ENCODE measurements at regions of chr11 and their contacts with region 1.

Region 1: DNA sequence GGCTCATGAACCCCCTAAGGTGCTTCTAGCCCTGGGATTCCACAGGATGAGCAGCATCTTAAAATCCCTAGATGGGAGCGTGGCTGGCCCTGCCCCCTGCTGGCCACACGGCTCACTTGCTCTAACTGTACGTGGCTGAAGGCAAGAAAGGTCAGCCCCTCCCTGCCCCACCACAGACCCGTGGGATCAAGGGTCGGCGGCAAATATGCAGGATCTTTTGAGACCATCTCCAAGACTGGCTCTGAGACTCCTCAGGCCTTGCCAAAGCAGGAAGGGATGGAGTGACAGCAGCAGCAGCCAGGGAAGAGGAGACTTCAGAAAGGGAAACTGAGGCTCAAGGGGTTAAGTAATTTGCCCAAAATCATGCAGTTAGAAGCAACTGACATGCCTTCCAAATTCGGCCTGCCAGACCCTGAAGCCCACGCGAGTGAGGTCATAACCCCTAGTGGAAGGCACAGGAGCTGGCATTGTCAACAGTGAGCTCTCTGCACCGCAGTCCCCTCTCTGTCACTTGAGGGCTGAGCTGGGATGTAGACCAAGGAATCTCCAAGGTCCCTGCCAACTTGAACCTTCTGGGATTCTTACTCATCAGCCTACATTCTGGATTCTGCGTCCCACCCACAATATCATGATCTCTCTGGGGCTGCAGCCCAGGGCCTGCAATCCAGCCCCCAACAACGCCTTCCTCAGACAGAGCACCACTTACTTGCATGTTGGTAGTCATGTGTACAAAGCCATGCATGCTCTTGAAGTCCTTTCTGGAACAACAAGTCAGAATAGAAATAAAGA is 31.4 kb downstream of the CREB3L1 start:
- DNase-seq: peak; percentile 88
- ATAC-seq: peak; percentile 88
- H3K4me3 Mint-ChIP-seq: no peak overlapping the region
- H3K27ac Mint-ChIP-seq: no peak overlapping the region
- H3K4me1 Mint-ChIP-seq: peaks cover 5% of the 10 kb centered on the region
- H3K27me3 Mint-ChIP-seq: no peaks in the 10 kb centered on the region
- CTCF ChIP-seq: peak; percentile 92

Region 2: GRCh38 chr11:45676522-45677095 is 632.2 kb before region 1 on chr11:
- CTCF ChIA-PET with region 1: no interaction called
- POLR2A ChIA-PET with region 1: no interaction called
- intact Hi-C with region 1: no loop called
- DNase-seq: no peak
- ATAC-seq: no peak
- H3K4me3 Mint-ChIP-seq: no peak overlapping the region
- H3K27ac Mint-ChIP-seq: no peak overlapping the region
- H3K4me1 Mint-ChIP-seq: no peaks in the 10 kb centered on the region
- H3K27me3 Mint-ChIP-seq: no peaks in the 10 kb centered on the region
- CTCF ChIP-seq: no peak

Region 3: GRCh38 chr11:46247664-46248063 is 61.2 kb before region 1 on chr11:
- CTCF ChIA-PET with region 1: interaction called, 382 read pairs
- POLR2A ChIA-PET with region 1: interaction called, 5 read pairs
- intact Hi-C with region 1: no loop called
- DNase-seq: peak; percentile 63
- ATAC-seq: no peak
- H3K4me3 Mint-ChIP-seq: no peak overlapping the region
- H3K27ac Mint-ChIP-seq: no peak overlapping the region
- H3K4me1 Mint-ChIP-seq: peaks cover 13% of the 10 kb centered on the region
- H3K27me3 Mint-ChIP-seq: peaks cover 2% of the 10 kb centered on the region
- CTCF ChIP-seq: peak; percentile 54

Region 4: GRCh38 chr11:46295312-46296058 is 13.3 kb before region 1 on chr11:
- CTCF ChIA-PET with region 1: interaction called, 42 read pairs
- POLR2A ChIA-PET with region 1: no interaction called
- intact Hi-C with region 1: no loop called
- DNase-seq: peak; percentile 73
- ATAC-seq: peak; percentile 98
- H3K4me3 Mint-ChIP-seq: peak overlapping the region; percentile 72
- H3K27ac Mint-ChIP-seq: no peak overlapping the region
- H3K4me1 Mint-ChIP-seq: peaks cover 12% of the 10 kb centered on the region
- H3K27me3 Mint-ChIP-seq: peaks cover 8% of the 10 kb centered on the region
- CTCF ChIP-seq: peak; percentile 19

Region 5: DNA sequence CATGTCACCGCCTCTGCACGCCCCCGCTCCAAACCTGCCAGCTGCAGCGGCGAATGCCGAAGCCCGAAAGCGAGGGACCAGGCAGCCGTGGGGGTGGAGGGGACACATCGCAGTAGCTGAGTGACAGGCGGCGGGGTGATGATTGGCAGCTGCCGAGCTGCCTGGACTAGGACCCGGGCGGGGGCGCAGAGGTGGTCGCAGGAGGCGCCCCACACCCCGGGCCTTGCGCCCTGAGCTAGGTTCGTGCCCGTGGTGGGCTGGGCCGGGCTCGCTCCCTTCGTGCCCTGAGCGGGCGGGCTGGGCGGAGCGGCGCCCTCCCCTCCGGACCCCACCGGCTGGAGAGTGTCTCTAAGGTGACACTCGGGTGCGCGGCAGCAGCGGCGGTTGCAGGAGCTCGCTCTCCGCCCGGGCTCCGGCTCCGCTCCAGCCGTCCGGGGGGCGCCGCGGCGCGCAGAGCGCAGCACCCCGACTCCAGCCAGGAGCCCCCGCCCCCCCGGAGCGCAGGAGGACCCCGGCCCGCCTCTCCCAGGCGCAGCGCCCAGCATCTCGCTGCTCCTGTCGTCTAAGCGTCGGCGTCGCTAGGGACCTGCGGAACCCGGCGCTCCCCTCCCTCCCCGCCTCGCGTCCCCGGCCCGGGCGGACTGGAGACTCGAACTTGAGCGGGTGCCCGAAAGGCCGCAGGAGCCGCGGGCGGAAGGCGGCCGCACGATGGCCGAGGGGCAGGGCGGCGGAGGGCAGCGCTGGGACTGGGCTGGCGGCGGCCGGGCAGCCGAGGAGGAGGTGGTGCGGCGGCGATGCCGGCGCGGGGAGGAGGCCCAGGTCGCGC is 24.0 kb after region 1 on chr11:
- CTCF ChIA-PET with region 1: interaction called, 24 read pairs
- POLR2A ChIA-PET with region 1: no interaction called
- intact Hi-C with region 1: no loop called
- DNase-seq: peak; percentile 71
- ATAC-seq: peak; percentile 31
- H3K4me3 Mint-ChIP-seq: peak overlapping the region; percentile 67
- H3K27ac Mint-ChIP-seq: peak overlapping the region; percentile 16
- H3K4me1 Mint-ChIP-seq: peaks cover 45% of the 10 kb centered on the region
- H3K27me3 Mint-ChIP-seq: no peaks in the 10 kb centered on the region
- CTCF ChIP-seq: no peak

Region 6: DNA sequence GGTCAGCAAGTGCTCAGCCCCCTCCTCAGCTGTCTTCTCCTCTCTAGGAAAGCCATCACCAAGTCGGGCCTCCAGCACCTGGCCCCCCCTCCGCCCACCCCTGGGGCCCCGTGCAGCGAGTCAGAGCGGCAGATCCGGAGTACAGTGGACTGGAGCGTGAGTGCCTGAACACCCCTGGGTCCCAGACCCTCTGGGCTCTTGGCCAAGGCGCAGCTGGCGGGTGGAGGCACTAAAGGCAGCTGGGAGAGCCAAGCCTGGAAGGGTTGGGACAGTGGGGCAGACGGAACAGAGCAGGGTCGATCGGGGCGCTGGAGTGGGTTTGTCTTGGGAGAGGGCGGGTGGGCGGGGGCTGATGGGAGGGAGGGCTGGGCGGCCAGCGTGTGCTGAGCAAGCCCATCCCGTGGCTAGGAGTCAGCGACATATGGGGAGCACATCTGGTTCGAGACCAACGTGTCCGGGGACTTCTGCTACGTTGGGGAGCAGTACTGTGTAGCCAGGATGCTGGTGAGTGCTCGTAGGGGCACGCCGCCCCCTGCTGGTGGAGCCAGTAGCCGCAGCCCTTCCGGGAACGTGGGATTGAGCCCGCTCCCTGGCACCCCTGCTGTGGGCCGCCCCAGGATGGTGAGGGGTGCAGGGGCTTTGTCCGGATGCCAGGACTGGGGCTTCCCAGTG is 58.6 kb after region 1 on chr11:
- CTCF ChIA-PET with region 1: interaction called, 10 read pairs
- POLR2A ChIA-PET with region 1: no interaction called
- intact Hi-C with region 1: no loop called
- DNase-seq: peak; percentile 88
- ATAC-seq: peak; percentile 89
- H3K4me3 Mint-ChIP-seq: peak overlapping the region; percentile 42
- H3K27ac Mint-ChIP-seq: peak overlapping the region; percentile 88
- H3K4me1 Mint-ChIP-seq: peaks cover 40% of the 10 kb centered on the region
- H3K27me3 Mint-ChIP-seq: no peaks in the 10 kb centered on the region
- CTCF ChIP-seq: peak; percentile 96